ENCODE measurements at regions of chr18 and their contacts with region 1.

Region 1: GRCh38 chr18:59509481-59510442 is 150.7 kb upstream of the LMAN1 start:
- DNase-seq: no peak
- H3K4me3 ChIP-seq: no peak overlapping the region
- CTCF ChIP-seq: no peak

Region 2: GRCh38 chr18:59549503-59550173 is 39.9 kb after region 1 on chr18:
- in situ Hi-C with region 1: loop called (anchors 5 kb)
- DNase-seq: no peak
- H3K4me3 ChIP-seq: no peak overlapping the region
- CTCF ChIP-seq: no peak

Region 3: DNA sequence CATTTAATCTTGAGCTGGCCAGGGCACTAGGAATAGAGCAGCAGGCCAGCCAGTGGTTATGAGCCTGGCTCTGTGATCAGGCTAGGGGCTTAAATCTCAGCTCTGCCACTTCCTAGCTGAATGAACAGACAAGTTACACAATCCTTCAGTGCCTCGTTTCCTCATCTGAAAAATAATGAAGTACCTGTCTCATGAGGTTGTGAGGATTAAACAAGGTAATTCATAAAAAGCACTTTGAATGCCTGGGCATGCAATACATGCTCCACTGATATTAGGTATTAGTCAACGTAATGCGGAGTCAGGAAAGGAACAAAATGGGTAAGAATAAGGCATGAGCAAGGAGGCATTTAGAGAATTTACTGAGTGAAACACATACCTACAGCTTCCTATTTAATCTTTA is 87.3 kb after region 1 on chr18:
- in situ Hi-C with region 1: loop called (anchors 5 kb)
- DNase-seq: no peak
- H3K4me3 ChIP-seq: no peak overlapping the region
- CTCF ChIP-seq: no peak